Prostate gland (tissue), 2 donors: ENCODE measurements at regions of chr11 and their contacts with region 1.

Region 1: DNA sequence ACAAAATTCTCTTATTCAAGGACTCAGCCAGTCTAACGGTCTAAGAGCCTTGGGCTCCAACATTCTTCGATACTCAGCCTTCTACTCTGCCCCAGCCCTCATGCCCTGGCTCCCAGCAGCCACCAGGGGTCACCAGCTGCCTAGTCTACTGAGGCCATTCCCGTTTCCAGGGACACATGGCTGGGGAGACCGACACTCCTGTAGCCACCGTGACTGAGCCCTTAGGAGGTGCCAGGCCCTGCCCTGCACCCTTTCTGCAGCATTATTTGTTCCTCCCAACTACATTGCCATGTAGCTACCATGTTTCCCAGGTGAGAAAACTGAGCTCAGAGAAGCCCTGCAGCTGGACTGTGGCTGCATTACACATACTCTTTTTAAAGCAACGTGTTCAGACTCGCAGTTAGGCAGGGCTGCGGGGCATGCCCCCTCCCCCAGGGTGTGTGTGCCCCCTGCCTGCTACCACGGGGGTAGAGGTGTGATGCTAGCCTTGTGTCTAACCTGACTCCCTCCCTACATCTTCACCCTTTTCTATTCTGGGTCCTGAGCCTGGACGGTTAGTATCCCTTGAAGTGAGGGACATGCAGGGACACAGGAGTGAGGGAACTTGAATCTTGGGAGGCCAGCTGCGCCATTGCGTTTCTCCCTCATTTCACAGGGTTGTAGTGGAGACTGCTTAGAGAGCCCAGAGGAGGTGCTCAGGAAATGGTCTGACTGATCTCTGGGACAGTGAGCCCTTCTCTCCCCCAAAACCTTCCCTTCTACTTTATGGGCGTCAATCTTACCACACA is 17.5 kb downstream of the ATG16L2 start:
- DNase-seq: peak; percentile 77
- H3K4me3 ChIP-seq: no peak overlapping the region
- H3K27ac ChIP-seq: peak overlapping the region in 1 of 2 donors; percentile 37
- H3K4me1 ChIP-seq: peaks cover 5% of the 10 kb centered on the region
- H3K27me3 ChIP-seq: no peaks in the 10 kb centered on the region
- CTCF ChIP-seq: peak; percentile 86 to 97 (median 91)
- POLR2A ChIP-seq: no peak

Region 2: DNA sequence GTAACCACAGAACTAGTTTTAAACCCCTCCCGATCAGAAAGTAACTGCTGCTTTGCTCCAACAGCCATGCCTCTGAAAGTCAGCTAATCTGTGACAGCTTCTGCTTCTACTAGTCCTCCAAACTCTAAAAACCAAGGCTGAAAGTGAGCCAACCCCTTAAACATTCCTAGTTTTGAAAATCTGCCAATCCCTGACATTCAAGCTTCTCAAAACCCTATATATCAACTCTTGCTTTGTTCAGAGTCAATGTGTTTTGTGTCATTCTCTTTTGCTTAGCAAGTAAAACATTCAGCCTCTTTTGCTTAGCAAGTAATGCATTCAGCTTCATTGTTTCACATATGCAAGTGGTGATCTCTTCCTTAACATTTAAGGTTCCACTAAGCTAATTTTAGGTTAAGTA is 39.4 kb after region 1 on chr11:
- intact Hi-C with region 1: no loop called
- DNase-seq: no peak
- H3K4me3 ChIP-seq: no peak overlapping the region
- H3K27ac ChIP-seq: no peak overlapping the region
- H3K4me1 ChIP-seq: no peaks in the 10 kb centered on the region
- H3K27me3 ChIP-seq: no peaks in the 10 kb centered on the region
- CTCF ChIP-seq: no peak
- POLR2A ChIP-seq: no peak

Region 3: DNA sequence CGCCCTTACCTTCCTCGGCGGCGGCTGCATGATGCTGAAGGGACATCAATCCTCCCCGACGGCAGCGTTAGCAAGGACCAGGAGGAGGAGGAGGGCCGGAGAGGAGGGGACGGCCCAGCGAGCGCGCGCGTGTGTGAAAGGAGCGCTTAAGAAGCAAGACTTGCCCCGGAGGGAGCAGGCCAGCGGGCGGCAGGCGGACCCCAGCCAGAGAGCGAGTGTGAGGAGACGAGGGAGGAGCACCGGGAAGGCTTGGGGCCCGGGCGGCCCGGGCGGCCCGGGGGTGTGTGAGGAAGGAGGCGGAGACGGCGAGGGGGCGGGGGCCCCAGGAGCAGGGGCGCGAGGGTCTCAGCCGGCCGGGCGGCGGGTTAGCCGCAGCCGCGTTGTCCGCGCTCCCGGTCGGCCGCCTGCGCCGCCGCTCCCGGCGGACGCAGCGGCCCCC is 310.2 kb after region 1 on chr11:
- intact Hi-C with region 1: loop called (anchors 10 kb)
- DNase-seq: peak; percentile 36
- H3K4me3 ChIP-seq: peak overlapping the region; percentile 93 to 94
- H3K27ac ChIP-seq: peak overlapping the region; percentile 95 to 96
- H3K4me1 ChIP-seq: peaks cover 4% of the 10 kb centered on the region
- H3K27me3 ChIP-seq: no peaks in the 10 kb centered on the region
- CTCF ChIP-seq: no peak
- POLR2A ChIP-seq: no peak

Region 4: GRCh38 chr11:73242251-73243079 is 410.8 kb after region 1 on chr11:
- intact Hi-C with region 1: loop called (anchors 5 kb)
- DNase-seq: peak; percentile 68
- H3K4me3 ChIP-seq: no peak overlapping the region
- H3K27ac ChIP-seq: no peak overlapping the region
- H3K4me1 ChIP-seq: no peaks in the 10 kb centered on the region
- H3K27me3 ChIP-seq: no peaks in the 10 kb centered on the region
- CTCF ChIP-seq: peak; percentile 81 to 94 (median 90)
- POLR2A ChIP-seq: no peak